ENCODE measurements at regions of chr17 and their contacts with region 1.

Region 1: DNA sequence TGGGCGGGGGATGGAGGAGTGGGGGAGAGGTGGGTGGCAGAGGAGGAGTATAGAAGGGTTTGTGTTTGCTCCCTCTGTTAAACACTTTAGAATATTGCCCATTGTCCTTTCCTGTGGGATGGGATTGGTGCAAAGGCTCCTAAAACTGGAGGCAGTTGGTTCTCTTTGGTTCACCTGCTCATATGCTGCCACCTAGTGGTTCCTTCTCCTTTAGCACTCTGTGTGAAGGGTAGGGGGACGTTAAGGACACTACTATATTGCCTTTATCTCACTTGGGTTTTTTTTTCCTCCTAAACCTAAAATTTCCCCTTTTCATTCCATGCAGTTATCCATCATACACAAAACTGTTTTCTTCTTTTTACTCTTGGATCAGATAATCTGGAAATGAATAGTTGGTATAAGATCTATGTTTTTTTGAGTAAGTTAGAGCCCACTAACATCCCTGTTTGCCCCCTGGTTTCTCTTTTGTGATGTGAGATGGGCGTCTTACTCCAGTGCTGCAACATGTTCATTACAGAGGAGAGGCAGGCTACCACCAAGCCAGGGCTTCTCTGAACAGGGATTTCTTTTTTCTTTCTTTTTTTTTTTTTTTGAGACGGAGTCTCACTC is 23.8 kb downstream of the SNX11 start:
- DNase-seq: no peak
- ATAC-seq: peak; percentile 85 to 91
- H3K4me3 ChIP-seq: no peak overlapping the region
- H3K27ac ChIP-seq: no peak overlapping the region
- H3K4me1 ChIP-seq: no peaks in the 10 kb centered on the region
- H3K27me3 ChIP-seq: no peaks in the 10 kb centered on the region

Region 2: GRCh38 chr17:48084932-48085444 is 46.3 kb before region 1 on chr17:
- intact Hi-C with region 1: loop called in 1 of 4 experiments (anchors 5 kb)
- DNase-seq: no peak
- ATAC-seq: no peak
- H3K4me3 ChIP-seq: no peak overlapping the region
- H3K27ac ChIP-seq: no peak overlapping the region
- H3K4me1 ChIP-seq: peaks cover 5% of the 10 kb centered on the region
- H3K27me3 ChIP-seq: no peaks in the 10 kb centered on the region

Measured in right cardiac atrium (tissue), 5 donors.